ENCODE measurements at regions of chr7 and their contacts with region 1.

Region 1: GRCh38 chr7:69598081-69598486 is at the start of gene AUTS2:
- DNase-seq: peak; percentile 86 to 91 (median 90)
- ATAC-seq: peak; percentile 85 to 93 (median 90)
- H3K4me3 ChIP-seq: peak within 1 kb of the TSS; percentile 65 to 98 (median 85)
- H3K27ac ChIP-seq: peak within 1 kb of the TSS; percentile 72 to 95 (median 87)
- H3K4me1 ChIP-seq: peaks cover 0 to 34% (median 4%) of the 10 kb centered on the region in 12 donors
- H3K27me3 ChIP-seq: no peaks in the 10 kb centered on the region
- CTCF ChIP-seq: no peak
- POLR2A ChIP-seq: no peak
- total RNA-seq, gene AUTS2: 5.4 to 14.0 (median 8.3) TPM

Region 2: GRCh38 chr7:69457595-69458504 is 140.2 kb before region 1 on chr7:
- intact Hi-C with region 1: loop called in 4 of 10 experiments (anchors 2 to 10 kb)
- DNase-seq: peak; percentile 78 to 85 (median 83)
- ATAC-seq: peak; percentile 93 to 97 (median 95)
- H3K4me3 ChIP-seq: no peak overlapping the region
- H3K27ac ChIP-seq: peak overlapping the region in 9 of 12 donors; percentile 25 to 60 (median 39)
- H3K4me1 ChIP-seq: peaks cover 0 to 18% (median 8%) of the 10 kb centered on the region in 12 donors
- H3K27me3 ChIP-seq: no peaks in the 10 kb centered on the region
- CTCF ChIP-seq: no peak
- POLR2A ChIP-seq: no peak

Region 3: GRCh38 chr7:69656890-69657289 is 58.8 kb after region 1 on chr7:
- intact Hi-C with region 1: loop called in 2 of 10 experiments (anchors 5 kb)
- DNase-seq: peak in 4 of 5 donors; percentile 65 to 72 (median 70)
- ATAC-seq: peak; percentile 62 to 94 (median 74)
- H3K4me3 ChIP-seq: no peak overlapping the region
- H3K27ac ChIP-seq: peak overlapping the region in 10 of 12 donors; percentile 8 to 68 (median 42)
- H3K4me1 ChIP-seq: peaks cover 0 to 46% (median 24%) of the 10 kb centered on the region in 12 donors
- H3K27me3 ChIP-seq: no peaks in the 10 kb centered on the region
- CTCF ChIP-seq: no peak
- POLR2A ChIP-seq: no peak

Region 4: GRCh38 chr7:69782917-69783684 is 185.0 kb after region 1 on chr7:
- intact Hi-C with region 1: loop called in 1 of 10 experiments (anchors 10 kb)
- DNase-seq: peak in 4 of 5 donors; percentile 43 to 79 (median 74)
- ATAC-seq: peak; percentile 26 to 52 (median 50)
- H3K4me3 ChIP-seq: no peak overlapping the region
- H3K27ac ChIP-seq: peak overlapping the region in 6 of 12 donors; percentile 20 to 56 (median 27)
- H3K4me1 ChIP-seq: peaks cover 0 to 36% (median 16%) of the 10 kb centered on the region in 12 donors
- H3K27me3 ChIP-seq: no peaks in the 10 kb centered on the region
- CTCF ChIP-seq: no peak
- POLR2A ChIP-seq: no peak

Region 5: GRCh38 chr7:69837387-69838068 is 239.4 kb after region 1 on chr7:
- intact Hi-C with region 1: no loop called
- DNase-seq: no peak
- ATAC-seq: no peak
- H3K4me3 ChIP-seq: no peak overlapping the region
- H3K27ac ChIP-seq: no peak overlapping the region
- H3K4me1 ChIP-seq: no peaks in the 10 kb centered on the region
- H3K27me3 ChIP-seq: no peaks in the 10 kb centered on the region
- CTCF ChIP-seq: no peak
- POLR2A ChIP-seq: no peak